ENCODE measurements at regions of chr12 and their contacts with region 1.

Region 1: GRCh38 chr12:67648521-67649260 is at the start of gene DYRK2:
- DNase-seq: peak; percentile 75 to 79 (median 77)
- H3K4me3 ChIP-seq: peak within 1 kb of the TSS; percentile 42 to 84
- H3K4me3 Mint-ChIP-seq: peak within 1 kb of the TSS; percentile 84 to 100 (median 98)
- H3K27ac ChIP-seq: peak within 1 kb of the TSS; percentile 69
- H3K27ac Mint-ChIP-seq: peak within 1 kb of the TSS; percentile 89 to 98 (median 94)
- H3K4me1 ChIP-seq: peaks cover 34% of the 10 kb centered on the region
- H3K4me1 Mint-ChIP-seq: peaks cover 28 to 46% (median 32%) of the 10 kb centered on the region in 4 donors
- H3K27me3 ChIP-seq: no peaks in the 10 kb centered on the region
- H3K27me3 Mint-ChIP-seq: no peaks in the 10 kb centered on the region
- total RNA-seq, gene DYRK2: 167 to 170 TPM

Region 2: GRCh38 chr12:67327466-67327865 is 321.2 kb before region 1 on chr12:
- CTCF ChIA-PET with region 1: no interaction called
- POLR2A ChIA-PET with region 1: no interaction called
- intact Hi-C with region 1: no loop called
- DNase-seq: no peak
- H3K4me3 ChIP-seq: no peak overlapping the region
- H3K4me3 Mint-ChIP-seq: no peak overlapping the region
- H3K27ac ChIP-seq: no peak overlapping the region
- H3K27ac Mint-ChIP-seq: no peak overlapping the region
- H3K4me1 ChIP-seq: no peaks in the 10 kb centered on the region
- H3K4me1 Mint-ChIP-seq: peaks cover 2 to 6% (median 4%) of the 10 kb centered on the region in 4 donors
- H3K27me3 ChIP-seq: no peaks in the 10 kb centered on the region
- H3K27me3 Mint-ChIP-seq: no peaks in the 10 kb centered on the region

Region 3: GRCh38 chr12:67400742-67401141 is 247.9 kb before region 1 on chr12:
- CTCF ChIA-PET with region 1: no interaction called
- POLR2A ChIA-PET with region 1: no interaction called
- intact Hi-C with region 1: no loop called
- DNase-seq: no peak
- H3K4me3 ChIP-seq: no peak overlapping the region
- H3K4me3 Mint-ChIP-seq: no peak overlapping the region
- H3K27ac ChIP-seq: no peak overlapping the region
- H3K27ac Mint-ChIP-seq: no peak overlapping the region
- H3K4me1 ChIP-seq: no peaks in the 10 kb centered on the region
- H3K4me1 Mint-ChIP-seq: no peaks in the 10 kb centered on the region
- H3K27me3 ChIP-seq: no peaks in the 10 kb centered on the region
- H3K27me3 Mint-ChIP-seq: peaks cover 5 to 8% of the 10 kb centered on the region in 2 donors

Region 4: DNA sequence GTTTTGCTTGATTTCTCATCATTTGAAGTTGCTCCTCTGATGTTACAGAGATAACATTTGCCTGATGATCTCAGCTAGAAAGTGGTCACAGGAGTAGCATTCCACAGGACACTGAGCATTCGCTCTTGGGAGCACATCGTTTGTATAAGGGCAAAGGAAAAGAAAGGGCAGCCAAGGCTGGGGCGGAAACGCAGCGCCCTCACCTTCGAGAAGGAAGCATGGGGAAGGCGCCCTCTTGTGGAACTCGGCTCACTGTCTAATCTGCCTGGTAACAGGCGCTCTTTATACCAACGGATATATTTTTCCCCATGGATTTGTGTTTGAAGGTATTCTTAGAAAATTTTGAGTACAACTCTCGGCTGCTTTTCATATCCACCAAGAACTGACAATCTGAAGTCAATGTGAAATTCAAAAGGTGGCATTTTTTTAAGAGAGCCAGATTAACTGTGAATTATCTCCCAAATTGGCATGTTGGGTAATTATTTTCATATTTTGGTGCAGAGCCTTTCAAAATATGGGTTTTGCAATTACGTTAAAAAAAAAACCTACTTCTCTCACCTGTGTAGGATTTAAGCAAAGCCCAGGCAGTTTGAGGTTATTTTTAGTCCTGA is 206.8 kb before region 1 on chr12:
- CTCF ChIA-PET with region 1: interaction called, 4 read pairs
- POLR2A ChIA-PET with region 1: interaction called, 20 read pairs
- intact Hi-C with region 1: loop called (anchors 1 kb)
- DNase-seq: peak; percentile 68 to 79 (median 68)
- H3K4me3 ChIP-seq: no peak overlapping the region
- H3K4me3 Mint-ChIP-seq: peak overlapping the region; percentile 43 to 72 (median 68)
- H3K27ac ChIP-seq: no peak overlapping the region
- H3K27ac Mint-ChIP-seq: peak overlapping the region in 6 of 7 donors; percentile 10 to 86 (median 82)
- H3K4me1 ChIP-seq: peaks cover 12% of the 10 kb centered on the region
- H3K4me1 Mint-ChIP-seq: peaks cover 21 to 35% (median 27%) of the 10 kb centered on the region in 4 donors
- H3K27me3 ChIP-seq: no peaks in the 10 kb centered on the region
- H3K27me3 Mint-ChIP-seq: no peaks in the 10 kb centered on the region

Region 5: GRCh38 chr12:67515679-67516340 is 132.9 kb before region 1 on chr12:
- CTCF ChIA-PET with region 1: interaction called, 13 read pairs
- POLR2A ChIA-PET with region 1: interaction called, 88 read pairs
- intact Hi-C with region 1: loop called (anchors 2 kb)
- DNase-seq: peak; percentile 64 to 78 (median 70)
- H3K4me3 ChIP-seq: peak overlapping the region in 1 of 2 donors; percentile 4
- H3K4me3 Mint-ChIP-seq: peak overlapping the region; percentile 16 to 79 (median 69)
- H3K27ac ChIP-seq: no peak overlapping the region
- H3K27ac Mint-ChIP-seq: peak overlapping the region; percentile 50 to 91 (median 86)
- H3K4me1 ChIP-seq: peaks cover 64% of the 10 kb centered on the region
- H3K4me1 Mint-ChIP-seq: peaks cover 46 to 73% (median 54%) of the 10 kb centered on the region in 4 donors
- H3K27me3 ChIP-seq: no peaks in the 10 kb centered on the region
- H3K27me3 Mint-ChIP-seq: no peaks in the 10 kb centered on the region

Region 6: GRCh38 chr12:67592216-67593011 is 56.3 kb before region 1 on chr12:
- CTCF ChIA-PET with region 1: interaction called, 4 read pairs
- POLR2A ChIA-PET with region 1: interaction called, 47 read pairs
- intact Hi-C with region 1: loop called (anchors 2 kb)
- DNase-seq: peak in 4 of 5 donors; percentile 29 to 53 (median 44)
- H3K4me3 ChIP-seq: peak overlapping the region in 1 of 2 donors; percentile 25
- H3K4me3 Mint-ChIP-seq: peak overlapping the region in 7 of 8 donors; percentile 45 to 76 (median 69)
- H3K27ac ChIP-seq: no peak overlapping the region
- H3K27ac Mint-ChIP-seq: peak overlapping the region; percentile 33 to 93 (median 82)
- H3K4me1 ChIP-seq: peaks cover 55% of the 10 kb centered on the region
- H3K4me1 Mint-ChIP-seq: peaks cover 36 to 62% (median 50%) of the 10 kb centered on the region in 4 donors
- H3K27me3 ChIP-seq: no peaks in the 10 kb centered on the region
- H3K27me3 Mint-ChIP-seq: no peaks in the 10 kb centered on the region

Region 7: DNA sequence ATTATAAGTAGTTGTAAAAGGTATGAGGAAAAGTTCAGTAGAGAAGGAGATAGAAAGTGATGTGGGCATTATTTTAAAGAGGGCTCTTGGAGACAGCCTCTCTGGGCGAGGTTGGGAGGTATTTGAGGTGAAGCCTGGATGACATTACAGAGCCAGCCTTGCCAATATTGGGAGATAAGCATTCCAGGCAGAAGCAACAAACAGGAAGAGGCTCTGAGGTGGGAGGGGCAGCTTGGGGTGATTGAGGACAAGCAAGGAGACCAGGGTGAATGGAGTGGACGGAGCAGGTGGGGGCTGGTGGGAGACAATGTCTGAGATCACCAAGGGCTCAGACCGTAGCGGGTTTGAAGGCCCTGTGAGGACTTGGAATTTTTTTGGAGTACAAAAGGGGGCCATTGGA is 87.2 kb after region 1 on chr12:
- CTCF ChIA-PET with region 1: no interaction called
- POLR2A ChIA-PET with region 1: no interaction called
- intact Hi-C with region 1: no loop called
- DNase-seq: no peak
- H3K4me3 ChIP-seq: no peak overlapping the region
- H3K4me3 Mint-ChIP-seq: no peak overlapping the region
- H3K27ac ChIP-seq: no peak overlapping the region
- H3K27ac Mint-ChIP-seq: peak overlapping the region in 2 of 7 donors; percentile 16 to 57
- H3K4me1 ChIP-seq: no peaks in the 10 kb centered on the region
- H3K4me1 Mint-ChIP-seq: no peaks in the 10 kb centered on the region
- H3K27me3 ChIP-seq: no peaks in the 10 kb centered on the region
- H3K27me3 Mint-ChIP-seq: no peaks in the 10 kb centered on the region

Region 8: DNA sequence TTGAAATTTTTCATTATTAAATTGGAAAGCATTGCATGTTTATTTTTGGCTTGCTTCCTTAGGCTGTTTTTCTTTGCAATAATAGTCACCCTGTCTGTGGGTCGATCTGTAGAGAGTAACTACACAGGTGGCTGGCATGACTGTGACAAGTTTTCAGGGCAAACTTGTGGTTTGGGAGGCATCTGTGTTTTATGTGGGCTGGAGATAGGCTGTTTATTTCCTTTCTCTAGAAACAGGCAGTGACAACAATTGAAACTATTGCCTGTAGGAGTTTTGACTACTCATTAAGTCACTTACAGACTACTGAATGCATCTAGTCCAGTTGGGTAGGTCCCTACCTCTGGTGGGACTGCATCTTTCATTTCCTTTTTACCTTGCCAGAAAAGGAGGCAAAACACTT is 155.5 kb after region 1 on chr12:
- CTCF ChIA-PET with region 1: no interaction called
- POLR2A ChIA-PET with region 1: no interaction called
- intact Hi-C with region 1: loop called (anchors 1 kb)
- DNase-seq: peak; percentile 52 to 80 (median 61)
- H3K4me3 ChIP-seq: no peak overlapping the region
- H3K4me3 Mint-ChIP-seq: no peak overlapping the region
- H3K27ac ChIP-seq: no peak overlapping the region
- H3K27ac Mint-ChIP-seq: no peak overlapping the region
- H3K4me1 ChIP-seq: peaks cover 31% of the 10 kb centered on the region
- H3K4me1 Mint-ChIP-seq: peaks cover 5 to 14% (median 8%) of the 10 kb centered on the region in 4 donors
- H3K27me3 ChIP-seq: no peaks in the 10 kb centered on the region
- H3K27me3 Mint-ChIP-seq: no peaks in the 10 kb centered on the region

Measured in CD4-positive, alpha-beta memory T cell (primary cell).